ENCODE measurements at regions of chr3 and their contacts with region 1.

Region 1: GRCh38 chr3:99965077-99965476 is 147.4 kb downstream of the CMSS1 start:
- DNase-seq: no peak
- H3K4me3 ChIP-seq: no peak overlapping the region
- H3K27ac ChIP-seq: peak overlapping the region; percentile 88 to 91
- H3K4me1 ChIP-seq: peaks cover 8 to 62% of the 10 kb centered on the region in 2 donors
- H3K27me3 ChIP-seq: no peaks in the 10 kb centered on the region
- CTCF ChIP-seq: no peak

Region 2: DNA sequence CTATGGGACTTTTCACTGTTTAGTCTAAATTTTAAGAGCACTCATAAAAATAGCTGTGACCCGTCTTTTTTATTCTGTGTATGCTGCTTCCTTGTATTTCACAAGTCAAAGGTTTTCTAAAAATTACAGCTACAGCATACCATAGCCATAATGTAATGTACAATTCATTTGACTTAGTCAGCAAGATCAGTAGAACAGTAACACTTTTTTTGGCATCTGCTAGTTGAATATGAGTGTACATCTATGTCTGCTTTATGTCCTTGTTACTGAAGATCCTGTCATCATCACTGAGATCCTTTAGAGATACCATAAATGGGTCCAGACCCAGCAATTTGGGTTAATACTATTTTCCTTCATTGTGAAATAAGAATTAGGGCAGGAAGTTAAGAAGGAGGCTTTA is 105.3 kb before region 1 on chr3:
- intact Hi-C with region 1: loop called (anchors 5 kb)
- DNase-seq: no peak
- H3K4me3 ChIP-seq: peak overlapping the region in 1 of 2 donors; percentile 34
- H3K27ac ChIP-seq: peak overlapping the region; percentile 86 to 98
- H3K4me1 ChIP-seq: peaks cover 19 to 77% of the 10 kb centered on the region in 2 donors
- H3K27me3 ChIP-seq: no peaks in the 10 kb centered on the region
- CTCF ChIP-seq: no peak

Region 3: GRCh38 chr3:99939876-99940275 is 25.2 kb before region 1 on chr3:
- intact Hi-C with region 1: loop called (anchors 2 kb)
- DNase-seq: no peak
- H3K4me3 ChIP-seq: peak overlapping the region in 1 of 2 donors; percentile 19
- H3K27ac ChIP-seq: peak overlapping the region; percentile 84 to 92
- H3K4me1 ChIP-seq: peaks cover 10 to 67% of the 10 kb centered on the region in 2 donors
- H3K27me3 ChIP-seq: no peaks in the 10 kb centered on the region
- CTCF ChIP-seq: no peak

Region 4: DNA sequence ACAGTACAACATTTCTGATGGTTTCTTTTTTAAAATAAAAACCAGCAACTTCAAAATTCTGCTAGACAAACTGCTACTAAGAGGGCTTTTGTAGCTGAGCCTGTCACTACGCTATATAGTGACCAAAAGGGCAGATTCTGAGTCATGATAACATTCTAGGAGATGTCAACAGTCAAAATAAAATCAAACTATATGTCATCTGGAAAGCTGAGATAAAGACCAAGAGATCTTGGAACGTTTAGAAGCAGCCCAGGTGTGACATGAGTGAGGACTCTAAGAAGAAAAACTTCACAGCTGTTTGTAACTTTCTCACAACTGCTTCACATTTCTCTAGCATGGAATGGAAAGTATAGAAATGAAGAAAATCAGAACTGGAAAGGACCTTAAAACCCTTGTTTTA is 64.6 kb after region 1 on chr3:
- intact Hi-C with region 1: loop called (anchors 5 kb)
- DNase-seq: no peak
- H3K4me3 ChIP-seq: no peak overlapping the region
- H3K27ac ChIP-seq: peak overlapping the region in 1 of 2 donors; percentile 45
- H3K4me1 ChIP-seq: peaks cover 7 to 28% of the 10 kb centered on the region in 2 donors
- H3K27me3 ChIP-seq: no peaks in the 10 kb centered on the region
- CTCF ChIP-seq: no peak

Region 5: GRCh38 chr3:100047455-100048141 is 82.5 kb after region 1 on chr3:
- intact Hi-C with region 1: loop called (anchors 5 kb)
- DNase-seq: no peak
- H3K4me3 ChIP-seq: no peak overlapping the region
- H3K27ac ChIP-seq: peak overlapping the region; percentile 47 to 89
- H3K4me1 ChIP-seq: peaks cover 6 to 28% of the 10 kb centered on the region in 2 donors
- H3K27me3 ChIP-seq: no peaks in the 10 kb centered on the region
- CTCF ChIP-seq: no peak

Region 6: DNA sequence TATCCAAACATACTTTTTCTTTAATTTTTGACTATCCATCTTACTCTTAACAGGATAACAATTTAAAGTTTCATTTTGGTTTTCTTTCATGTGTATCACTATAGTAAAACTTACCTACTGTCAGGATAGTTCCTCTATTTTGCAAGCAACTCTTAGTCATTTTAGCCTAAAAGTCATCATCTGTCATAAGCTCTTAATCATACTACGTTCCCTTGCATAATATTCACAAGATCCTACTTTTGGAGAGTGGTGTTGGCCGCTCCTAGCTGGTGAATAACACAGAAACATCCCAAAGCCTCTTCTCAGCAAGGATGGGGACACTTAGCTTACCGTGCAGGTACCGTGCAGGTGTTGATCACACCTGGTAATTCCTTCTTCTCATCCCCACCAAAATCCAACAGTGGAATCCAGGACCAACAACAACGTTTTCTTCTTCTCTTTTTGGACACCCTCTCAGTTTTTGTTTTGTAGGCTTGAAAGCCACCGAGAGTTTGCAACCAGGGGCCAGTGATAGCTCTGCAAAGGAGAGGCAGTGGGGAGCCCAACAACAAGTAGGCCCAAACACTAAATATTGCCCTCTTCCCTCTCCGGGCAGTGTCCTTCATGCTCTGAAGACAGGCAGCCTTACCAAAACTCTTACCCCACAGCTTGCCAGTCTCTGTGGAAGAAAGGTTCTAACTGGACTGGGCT is 148.8 kb after region 1 on chr3:
- intact Hi-C with region 1: no loop called
- DNase-seq: no peak
- H3K4me3 ChIP-seq: no peak overlapping the region
- H3K27ac ChIP-seq: no peak overlapping the region
- H3K4me1 ChIP-seq: peaks cover 12 to 22% of the 10 kb centered on the region in 2 donors
- H3K27me3 ChIP-seq: no peaks in the 10 kb centered on the region
- CTCF ChIP-seq: no peak